Esophagus muscularis mucosa (tissue), 4 donors: ENCODE measurements at regions of chr4 and their contacts with region 1.

Region 1: DNA sequence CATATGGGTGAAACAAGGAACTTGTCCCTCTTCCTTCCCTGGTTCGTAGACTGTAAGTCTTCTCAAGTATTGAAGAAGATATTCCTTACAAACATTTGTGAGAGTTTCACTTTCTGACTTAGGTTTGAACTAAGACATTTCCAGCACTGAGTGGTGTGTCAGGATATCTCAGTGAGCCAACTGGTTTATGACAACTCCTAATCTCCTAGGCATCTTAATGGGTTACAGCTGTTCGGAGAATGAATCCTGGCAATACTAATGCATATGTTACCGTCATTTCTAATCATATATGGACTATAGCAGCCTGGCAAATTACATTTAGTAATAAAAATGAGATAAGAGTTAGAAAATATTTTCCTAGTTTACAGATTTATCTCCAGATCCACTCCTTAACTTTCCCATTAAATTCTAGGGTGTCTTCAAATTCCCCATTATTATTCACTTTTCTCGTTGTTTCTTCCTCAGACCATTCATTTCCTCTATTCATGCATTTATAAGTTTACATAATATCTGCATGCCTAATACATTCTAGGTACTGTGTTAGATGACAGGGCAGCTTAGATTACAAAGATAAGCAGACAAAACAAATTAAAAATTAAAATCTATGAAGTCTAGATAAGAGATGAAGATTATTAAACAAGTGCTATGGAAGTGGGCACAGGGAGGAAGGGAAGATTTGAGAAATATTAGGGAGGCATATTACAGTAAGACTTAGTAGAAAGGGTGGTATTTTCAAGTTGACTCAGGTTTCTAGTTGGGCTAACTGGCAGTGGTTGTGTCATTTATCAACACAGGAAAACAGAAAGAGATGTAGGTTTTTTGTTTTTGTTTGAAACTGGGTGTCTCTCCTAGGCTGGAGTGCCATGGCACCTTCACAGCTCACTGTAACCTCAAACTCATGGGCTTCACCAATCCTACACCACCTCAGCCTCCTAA is 173.9 kb downstream of the WDFY3 start:
- DNase-seq: no peak
- H3K4me3 ChIP-seq: no peak overlapping the region
- H3K27ac ChIP-seq: no peak overlapping the region
- H3K4me1 ChIP-seq: no peaks in the 10 kb centered on the region
- H3K27me3 ChIP-seq: no peaks in the 10 kb centered on the region
- CTCF ChIP-seq: no peak
- EP300 ChIP-seq: no peak
- POLR2A ChIP-seq: no peak

Region 2: DNA sequence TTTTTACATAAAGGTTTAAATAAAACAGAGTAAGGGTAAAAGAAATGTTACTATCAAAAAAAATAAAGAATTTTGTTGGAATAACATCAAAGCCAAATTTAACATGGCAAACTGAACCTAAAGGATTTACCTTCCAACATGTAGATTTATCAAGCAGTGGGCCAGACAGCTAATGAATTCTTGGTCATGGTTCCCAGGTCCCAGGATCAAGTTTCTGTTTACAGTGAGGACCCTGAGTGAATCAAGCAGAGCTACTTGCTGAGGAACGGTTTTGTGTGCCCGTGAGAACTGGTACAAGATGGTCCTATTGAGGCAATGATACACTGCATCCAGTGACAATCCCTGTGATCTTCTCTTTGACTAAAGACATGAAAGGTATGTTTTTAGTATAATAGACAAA is 52.6 kb before region 1 on chr4:
- intact Hi-C with region 1: loop called (anchors 10 kb)
- DNase-seq: no peak
- H3K4me3 ChIP-seq: no peak overlapping the region
- H3K27ac ChIP-seq: no peak overlapping the region
- H3K4me1 ChIP-seq: no peaks in the 10 kb centered on the region
- H3K27me3 ChIP-seq: no peaks in the 10 kb centered on the region
- CTCF ChIP-seq: no peak
- EP300 ChIP-seq: no peak
- POLR2A ChIP-seq: no peak